ENCODE measurements at regions of chr1 and their contacts with region 1.

Region 1: GRCh38 chr1:54406339-54407153 is at the start of gene SSBP3:
- DNase-seq: peak; percentile 89 to 96 (median 93)
- ATAC-seq: peak; percentile 95
- H3K4me3 ChIP-seq: peak within 1 kb of the TSS; percentile 76
- H3K4me3 Mint-ChIP-seq: peak within 1 kb of the TSS; percentile 92 to 99 (median 96)
- H3K27ac ChIP-seq: peak within 1 kb of the TSS; percentile 93
- H3K27ac Mint-ChIP-seq: peak within 1 kb of the TSS; percentile 84 to 97 (median 91)
- H3K4me1 ChIP-seq: peaks cover 40 to 44% of the 10 kb centered on the region in 2 donors
- H3K4me1 Mint-ChIP-seq: peaks cover 59 to 74% (median 69%) of the 10 kb centered on the region in 7 donors
- H3K27me3 ChIP-seq: no peaks in the 10 kb centered on the region
- H3K27me3 Mint-ChIP-seq: no peaks in the 10 kb centered on the region
- total RNA-seq, gene SSBP3: 69.4 to 124 (median 98.1) TPM

Region 2: GRCh38 chr1:54052934-54053744 is 353.4 kb before region 1 on chr1 and contains the starts of genes TCEANC2 and TMEM59:
- CTCF ChIA-PET with region 1: no interaction called
- POLR2A ChIA-PET with region 1: no interaction called
- intact Hi-C with region 1: loop called (anchors 1 kb)
- DNase-seq: peak; percentile 84 to 99 (median 98)
- ATAC-seq: peak; percentile 94
- H3K4me3 ChIP-seq: peak within 1 kb of the TSS; percentile 94
- H3K4me3 Mint-ChIP-seq: no peak within 1 kb of the TSS
- H3K27ac ChIP-seq: peak within 1 kb of the TSS; percentile 92
- H3K27ac Mint-ChIP-seq: no peak within 1 kb of the TSS
- H3K4me1 ChIP-seq: peaks cover 23 to 34% of the 10 kb centered on the region in 2 donors
- H3K4me1 Mint-ChIP-seq: peaks cover 27 to 62% (median 52%) of the 10 kb centered on the region in 7 donors
- H3K27me3 ChIP-seq: no peaks in the 10 kb centered on the region
- H3K27me3 Mint-ChIP-seq: no peaks in the 10 kb centered on the region
- total RNA-seq, gene TCEANC2: 6.3 to 15.1 (median 12.2) TPM
- total RNA-seq, gene TMEM59: 127 to 197 (median 183) TPM

Region 3: GRCh38 chr1:54180701-54181360 is 225.7 kb before region 1 on chr1:
- CTCF ChIA-PET with region 1: no interaction called
- POLR2A ChIA-PET with region 1: interaction called, 3 read pairs
- intact Hi-C with region 1: loop called in 1 of 2 experiments (anchors 1 kb)
- DNase-seq: no peak
- ATAC-seq: no peak
- H3K4me3 ChIP-seq: no peak overlapping the region
- H3K4me3 Mint-ChIP-seq: no peak overlapping the region
- H3K27ac ChIP-seq: no peak overlapping the region
- H3K27ac Mint-ChIP-seq: peak overlapping the region in 1 of 9 donors; percentile 17
- H3K4me1 ChIP-seq: no peaks in the 10 kb centered on the region
- H3K4me1 Mint-ChIP-seq: no peaks in the 10 kb centered on the region
- H3K27me3 ChIP-seq: no peaks in the 10 kb centered on the region
- H3K27me3 Mint-ChIP-seq: no peaks in the 10 kb centered on the region

Region 4: GRCh38 chr1:54464482-54465146 is 58.1 kb after region 1 on chr1:
- CTCF ChIA-PET with region 1: interaction called, 6 read pairs
- POLR2A ChIA-PET with region 1: interaction called, 4 read pairs
- intact Hi-C with region 1: loop called (anchors 2 to 5 kb)
- DNase-seq: no peak
- ATAC-seq: peak; percentile 23
- H3K4me3 ChIP-seq: no peak overlapping the region
- H3K4me3 Mint-ChIP-seq: no peak overlapping the region
- H3K27ac ChIP-seq: no peak overlapping the region
- H3K27ac Mint-ChIP-seq: peak overlapping the region in 2 of 9 donors; percentile 8 to 13
- H3K4me1 ChIP-seq: peaks cover 27 to 31% of the 10 kb centered on the region in 2 donors
- H3K4me1 Mint-ChIP-seq: peaks cover 8 to 51% (median 41%) of the 10 kb centered on the region in 7 donors
- H3K27me3 ChIP-seq: no peaks in the 10 kb centered on the region
- H3K27me3 Mint-ChIP-seq: peaks cover 0 to 4% (median 0%) of the 10 kb centered on the region in 5 donors

Region 5: DNA sequence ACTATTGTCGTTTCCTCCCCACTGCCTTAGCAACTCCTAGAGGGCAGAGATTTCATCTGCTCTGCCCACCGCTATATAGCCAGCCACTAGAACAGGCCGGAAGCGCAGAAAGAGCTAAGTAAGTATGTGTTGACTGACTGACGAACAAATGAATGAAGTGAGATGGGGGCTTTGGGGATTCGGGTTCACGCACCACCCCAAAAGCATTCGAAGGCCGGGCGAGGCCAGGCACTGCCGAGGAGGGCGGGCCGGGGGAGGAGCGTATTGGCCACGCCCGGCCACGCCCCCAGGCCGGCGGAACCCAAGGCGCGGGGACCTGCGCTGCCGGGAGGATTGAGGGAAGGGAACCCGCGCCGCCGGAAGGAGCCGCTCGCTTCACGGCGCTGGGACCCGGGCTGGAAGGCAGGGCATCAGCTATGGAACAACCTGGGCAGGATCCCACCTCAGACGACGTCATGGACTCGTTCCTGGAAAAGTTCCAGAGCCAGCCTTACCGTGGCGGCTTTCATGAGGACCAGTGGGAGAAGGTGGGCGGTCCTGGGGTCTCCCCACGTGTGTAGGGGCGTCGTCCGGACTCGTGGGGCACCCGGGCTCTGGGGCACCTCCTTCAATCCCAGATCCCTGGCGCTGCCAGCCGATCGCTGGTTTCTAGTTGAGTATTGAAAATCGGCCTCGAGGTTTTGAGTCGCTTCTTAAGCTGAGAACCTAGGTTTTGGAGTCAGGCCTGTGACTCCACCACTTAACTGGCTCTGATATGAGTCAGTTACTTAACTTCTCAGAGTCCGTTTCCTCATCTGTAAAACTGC is 309.1 kb after region 1 on chr1 and contains the start of gene TTC4:
- CTCF ChIA-PET with region 1: no interaction called
- POLR2A ChIA-PET with region 1: no interaction called
- intact Hi-C with region 1: loop called (anchors 1 to 5 kb)
- DNase-seq: peak; percentile 71 to 92 (median 85)
- ATAC-seq: peak; percentile 99
- H3K4me3 ChIP-seq: peak within 1 kb of the TSS; percentile 86
- H3K4me3 Mint-ChIP-seq: peak within 1 kb of the TSS; percentile 81 to 96 (median 88)
- H3K27ac ChIP-seq: peak within 1 kb of the TSS; percentile 84
- H3K27ac Mint-ChIP-seq: peak within 1 kb of the TSS; percentile 58 to 94 (median 91)
- H3K4me1 ChIP-seq: peaks cover 14 to 15% of the 10 kb centered on the region in 2 donors
- H3K4me1 Mint-ChIP-seq: peaks cover 15 to 42% (median 34%) of the 10 kb centered on the region in 7 donors
- H3K27me3 ChIP-seq: no peaks in the 10 kb centered on the region
- H3K27me3 Mint-ChIP-seq: no peaks in the 10 kb centered on the region
- total RNA-seq, gene TTC4: 11.6 to 25.8 (median 21.4) TPM